ENCODE measurements at regions of chr12 and their contacts with region 1.

Region 1: GRCh38 chr12:32273712-32274111 is 125.6 kb upstream of the FGD4 start:
- DNase-seq: peak; percentile 92
- H3K4me3 ChIP-seq: peak overlapping the region; percentile 50
- H3K27ac ChIP-seq: peak overlapping the region; percentile 97
- H3K4me1 ChIP-seq: peaks cover 65% of the 10 kb centered on the region
- CTCF ChIP-seq: no peak

Region 2: GRCh38 chr12:32198555-32198954 is 75.2 kb before region 1 on chr12:
- CTCF ChIA-PET with region 1: no interaction called
- POLR2A ChIA-PET with region 1: no interaction called
- intact Hi-C with region 1: no loop called
- DNase-seq: no peak
- H3K4me3 ChIP-seq: no peak overlapping the region
- H3K27ac ChIP-seq: no peak overlapping the region
- H3K4me1 ChIP-seq: no peaks in the 10 kb centered on the region
- CTCF ChIP-seq: no peak

Region 3: DNA sequence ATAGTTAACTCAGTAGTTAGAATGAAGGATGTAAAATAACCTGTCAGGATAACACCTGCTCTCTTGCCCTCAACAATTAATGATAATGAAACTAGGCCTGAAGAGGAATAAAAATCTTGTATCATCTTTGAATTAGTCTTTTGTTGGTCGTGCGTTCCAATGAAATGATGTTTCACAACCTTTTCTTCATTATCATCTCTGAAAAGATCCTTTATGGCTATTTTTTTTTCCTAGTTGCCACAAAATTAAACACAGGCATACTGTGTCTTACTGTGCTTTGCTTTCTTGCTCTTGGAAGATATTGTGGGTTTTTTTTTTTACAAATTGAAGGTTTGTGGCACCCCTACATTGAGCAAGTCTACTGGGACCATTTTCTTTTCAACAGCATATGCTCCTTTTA is 38.5 kb before region 1 on chr12:
- CTCF ChIA-PET with region 1: no interaction called
- POLR2A ChIA-PET with region 1: no interaction called
- intact Hi-C with region 1: loop called (anchors 1 kb)
- DNase-seq: peak; percentile 52
- H3K4me3 ChIP-seq: no peak overlapping the region
- H3K27ac ChIP-seq: peak overlapping the region; percentile 35
- H3K4me1 ChIP-seq: peaks cover 31% of the 10 kb centered on the region
- CTCF ChIP-seq: no peak

Region 4: DNA sequence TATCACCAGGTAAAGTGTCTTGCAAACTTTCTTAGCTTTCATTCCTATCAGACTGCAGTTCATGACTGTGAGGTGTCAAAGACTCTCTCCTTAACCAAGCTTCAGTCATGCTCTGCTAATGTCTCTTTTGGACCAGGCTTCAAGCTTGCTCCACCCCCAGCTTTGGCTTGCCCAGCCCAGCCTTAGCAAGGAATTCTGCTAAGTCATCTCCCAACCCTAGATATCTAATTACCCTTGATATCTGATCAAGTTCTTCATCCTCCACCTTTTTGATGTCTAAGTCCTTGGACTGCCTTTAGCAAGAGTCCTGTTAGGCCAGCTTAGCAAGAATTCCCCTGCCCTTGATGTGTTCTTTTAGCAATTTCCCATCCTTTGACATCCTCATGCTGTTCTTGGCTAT is 16.7 kb after region 1 on chr12:
- CTCF ChIA-PET with region 1: no interaction called
- POLR2A ChIA-PET with region 1: interaction called, 10 read pairs
- intact Hi-C with region 1: no loop called
- DNase-seq: no peak
- H3K4me3 ChIP-seq: no peak overlapping the region
- H3K27ac ChIP-seq: no peak overlapping the region
- H3K4me1 ChIP-seq: peaks cover 17% of the 10 kb centered on the region
- CTCF ChIP-seq: no peak